A673 (cell line): ENCODE measurements at regions of chr17 and their contacts with region 1.

Region 1: GRCh38 chr17:3913531-3914311 is 2.5 kb downstream of the P2RX1 start:
- DNase-seq: peak; percentile 74
- H3K4me3 ChIP-seq: no peak overlapping the region
- H3K27ac ChIP-seq: no peak overlapping the region
- H3K4me1 ChIP-seq: peaks cover 9% of the 10 kb centered on the region
- H3K27me3 ChIP-seq: no peaks in the 10 kb centered on the region
- CTCF ChIP-seq: peak; percentile 97

Region 2: DNA sequence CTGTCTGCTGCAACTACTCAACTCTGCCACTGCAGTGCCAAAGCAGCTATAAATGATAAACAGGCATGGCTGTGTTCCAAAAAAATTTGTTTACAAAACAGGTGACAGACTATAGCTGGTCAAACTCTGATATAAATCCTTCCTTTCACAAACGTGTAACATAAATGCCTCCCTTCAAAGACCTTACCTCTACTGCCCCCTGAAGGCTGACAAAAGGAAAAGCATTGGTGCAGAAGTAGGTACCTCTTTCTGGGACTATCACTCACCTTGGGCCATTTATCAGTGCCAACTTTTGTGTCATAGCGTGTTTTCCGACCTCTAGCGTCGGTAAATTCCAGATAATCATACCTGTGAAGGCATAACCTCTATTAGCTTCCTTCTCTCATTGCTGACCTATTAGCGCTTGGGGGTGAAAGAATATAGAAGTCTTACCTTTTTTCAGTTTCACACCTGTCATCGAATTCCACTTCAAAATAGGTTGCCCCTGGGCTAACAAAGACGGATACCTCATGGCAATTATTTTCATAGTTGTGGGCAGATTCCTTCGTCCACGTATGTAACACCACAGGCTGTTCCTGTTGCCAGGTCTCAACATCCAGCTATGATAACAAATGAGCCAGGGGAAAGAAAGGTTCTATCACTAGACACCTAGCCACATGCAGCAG is 161.2 kb after region 1 on chr17:
- CTCF ChIA-PET with region 1: no interaction called
- POLR2A ChIA-PET with region 1: no interaction called
- intact Hi-C with region 1: loop called (anchors 10 kb)
- DNase-seq: peak; percentile 53
- H3K4me3 ChIP-seq: no peak overlapping the region
- H3K27ac ChIP-seq: no peak overlapping the region
- H3K4me1 ChIP-seq: no peaks in the 10 kb centered on the region
- H3K27me3 ChIP-seq: no peaks in the 10 kb centered on the region
- CTCF ChIP-seq: peak; percentile 83